Right ventricle myocardium superior (tissue), 1 donor: ENCODE measurements at regions of chr15 and their contacts with region 1.

Region 1: GRCh38 chr15:45118131-45118588 is 4.0 kb downstream of the DUOXA2 start:
- DNase-seq: peak; percentile 90
- ATAC-seq: peak; percentile 98

Region 2: DNA sequence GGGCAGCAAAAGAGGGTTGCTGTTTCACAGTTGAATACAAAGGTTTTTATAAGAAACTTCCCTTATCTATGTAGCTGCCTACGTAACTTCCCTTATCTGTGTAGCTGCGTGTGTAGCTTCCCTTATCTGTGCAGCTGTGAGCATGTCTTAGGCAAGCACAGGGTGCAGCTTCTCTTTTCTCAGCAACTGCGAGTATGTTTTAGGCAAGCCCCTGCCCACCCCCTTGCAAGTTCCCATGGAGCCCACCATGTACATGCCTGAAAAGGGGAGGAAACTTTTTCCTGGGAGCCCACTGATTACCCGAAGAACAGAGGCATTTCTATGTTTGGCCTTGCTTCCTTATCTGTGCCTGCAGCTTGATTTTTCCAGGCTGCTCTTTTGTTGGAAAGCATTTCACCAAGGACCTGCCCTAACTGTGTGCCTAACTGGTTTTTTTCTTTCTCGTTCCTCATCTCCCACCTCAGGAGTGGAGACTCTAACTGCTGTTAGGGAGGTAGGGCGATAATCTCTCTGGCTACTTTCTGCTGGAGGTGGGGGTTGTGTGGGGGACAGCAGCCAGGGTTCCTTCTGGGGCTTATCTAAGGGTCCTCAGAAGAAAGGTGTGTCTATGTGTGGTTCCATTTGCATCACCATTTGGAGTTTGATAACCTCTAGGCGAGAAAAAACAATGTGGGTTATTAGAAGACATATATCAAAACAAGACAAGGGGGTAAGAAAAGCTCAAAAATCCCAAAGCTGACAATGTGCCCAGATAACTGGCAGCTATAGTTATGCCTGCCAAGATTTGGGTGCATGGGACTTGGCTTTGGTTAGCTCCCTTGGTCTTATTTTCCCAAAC is 69.1 kb before region 1 on chr15:
- intact Hi-C with region 1: loop called (anchors 10 kb)
- DNase-seq: no peak
- ATAC-seq: peak; percentile 73